ENCODE measurements at regions of chr1 and their contacts with region 1.

Region 1: DNA sequence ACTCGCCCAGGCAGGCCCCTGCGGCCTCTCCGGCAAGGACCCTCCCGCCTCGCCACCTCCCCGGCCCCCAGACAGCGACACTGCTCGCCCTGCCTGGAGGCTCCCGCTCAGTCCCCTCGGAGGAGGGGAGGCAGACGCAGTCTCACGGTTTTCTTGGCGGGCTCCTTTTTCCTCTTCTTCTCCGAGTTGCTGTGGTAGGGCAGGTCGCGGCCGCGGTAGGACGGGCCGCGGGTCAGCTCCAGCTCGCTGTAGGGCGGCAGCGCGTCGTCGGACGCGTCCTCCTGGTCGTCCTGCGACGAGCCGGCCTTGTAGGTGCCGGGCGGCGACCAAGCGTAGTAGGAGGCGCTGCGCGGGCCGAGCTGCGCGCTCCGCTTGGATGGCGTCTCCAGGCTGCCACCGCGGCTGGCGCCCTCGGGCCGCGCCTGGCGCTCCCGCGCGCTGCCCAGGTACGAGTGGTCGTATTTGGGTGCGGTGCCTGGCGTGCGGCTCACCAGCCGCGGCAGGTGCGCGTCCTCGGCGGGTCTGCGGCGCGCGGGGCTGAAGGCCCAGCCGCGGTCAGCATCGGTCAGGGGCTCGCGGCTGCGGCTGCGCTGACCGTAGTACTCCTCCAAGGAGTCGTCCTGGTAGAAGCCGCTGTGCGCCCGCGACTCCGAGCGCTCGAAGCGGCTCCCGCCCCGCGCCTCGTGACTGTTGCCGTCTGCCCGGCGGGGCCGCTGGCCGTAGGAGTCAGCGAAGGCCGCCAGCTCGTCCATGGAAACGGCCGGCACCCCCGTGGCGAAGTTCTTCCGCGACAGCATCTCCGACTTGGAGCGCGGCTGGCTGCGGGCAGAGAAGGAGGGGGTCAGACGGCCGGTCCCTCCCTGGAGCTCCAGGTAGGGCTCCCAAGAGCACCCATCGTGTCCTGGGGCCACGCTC is 44.8 kb upstream of the TADA1 start:
- DNase-seq: peak; percentile 57
- ATAC-seq: peak; percentile 55
- H3K4me3 ChIP-seq: peak overlapping the region in 3 of 5 experiments; percentile 33 to 59 (median 46)
- H3K4me3 Mint-ChIP-seq: peak overlapping the region; percentile 86
- H3K27ac ChIP-seq: no peak overlapping the region
- H3K27ac Mint-ChIP-seq: no peak overlapping the region
- H3K4me1 ChIP-seq: peaks cover 35 to 38% of the 10 kb centered on the region in 2 donors
- H3K4me1 Mint-ChIP-seq: peaks cover 33% of the 10 kb centered on the region
- H3K27me3 ChIP-seq: peaks cover 0 to 30% (median 23%) of the 10 kb centered on the region in 4 experiments
- H3K27me3 Mint-ChIP-seq: peaks cover 39% of the 10 kb centered on the region
- CTCF ChIP-seq: no peak

Region 2: DNA sequence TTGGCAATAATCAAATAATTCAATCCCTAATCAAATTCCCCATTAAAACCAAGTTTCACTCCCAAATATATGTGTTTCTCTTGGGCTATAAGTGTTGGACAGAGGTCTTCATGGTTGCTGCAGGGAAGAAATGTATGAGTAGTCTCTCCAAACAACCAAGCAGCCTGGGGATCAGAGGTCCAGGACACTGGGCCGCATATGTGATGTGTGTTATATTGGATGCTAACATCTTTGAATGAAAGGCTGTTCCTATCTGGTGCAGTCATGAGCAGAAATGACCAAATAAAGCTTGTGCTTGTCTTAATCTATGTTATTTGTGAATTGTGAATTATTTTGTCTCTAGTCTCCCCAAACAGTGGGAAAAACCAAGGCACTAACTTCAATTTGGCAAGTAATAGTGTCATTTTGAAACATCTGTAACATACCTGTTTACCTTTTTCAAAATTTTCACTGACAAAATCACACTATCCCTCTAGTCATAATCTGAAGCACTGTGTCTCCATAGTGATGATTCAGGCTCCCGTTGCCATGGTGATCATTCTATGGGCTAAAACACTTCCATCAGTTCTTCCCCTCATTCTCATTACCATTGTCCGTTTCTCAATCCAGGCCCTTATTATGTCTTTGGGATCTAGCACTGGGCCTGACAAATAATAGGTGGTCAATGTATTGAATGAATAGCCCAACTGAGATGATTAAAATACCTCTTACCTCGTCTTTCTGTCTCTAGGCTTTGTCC is 32.3 kb before region 1 on chr1:
- CTCF ChIA-PET with region 1: no interaction called
- POLR2A ChIA-PET with region 1: no interaction called
- intact Hi-C with region 1: no loop called
- DNase-seq: no peak
- ATAC-seq: no peak
- H3K4me3 ChIP-seq: no peak overlapping the region
- H3K4me3 Mint-ChIP-seq: no peak overlapping the region
- H3K27ac ChIP-seq: no peak overlapping the region
- H3K27ac Mint-ChIP-seq: no peak overlapping the region
- H3K4me1 ChIP-seq: peaks cover 14 to 16% of the 10 kb centered on the region in 2 donors
- H3K4me1 Mint-ChIP-seq: peaks cover 10% of the 10 kb centered on the region
- H3K27me3 ChIP-seq: peaks cover 0 to 31% (median 18%) of the 10 kb centered on the region in 4 experiments
- H3K27me3 Mint-ChIP-seq: peaks cover 37% of the 10 kb centered on the region
- CTCF ChIP-seq: no peak

Region 3: DNA sequence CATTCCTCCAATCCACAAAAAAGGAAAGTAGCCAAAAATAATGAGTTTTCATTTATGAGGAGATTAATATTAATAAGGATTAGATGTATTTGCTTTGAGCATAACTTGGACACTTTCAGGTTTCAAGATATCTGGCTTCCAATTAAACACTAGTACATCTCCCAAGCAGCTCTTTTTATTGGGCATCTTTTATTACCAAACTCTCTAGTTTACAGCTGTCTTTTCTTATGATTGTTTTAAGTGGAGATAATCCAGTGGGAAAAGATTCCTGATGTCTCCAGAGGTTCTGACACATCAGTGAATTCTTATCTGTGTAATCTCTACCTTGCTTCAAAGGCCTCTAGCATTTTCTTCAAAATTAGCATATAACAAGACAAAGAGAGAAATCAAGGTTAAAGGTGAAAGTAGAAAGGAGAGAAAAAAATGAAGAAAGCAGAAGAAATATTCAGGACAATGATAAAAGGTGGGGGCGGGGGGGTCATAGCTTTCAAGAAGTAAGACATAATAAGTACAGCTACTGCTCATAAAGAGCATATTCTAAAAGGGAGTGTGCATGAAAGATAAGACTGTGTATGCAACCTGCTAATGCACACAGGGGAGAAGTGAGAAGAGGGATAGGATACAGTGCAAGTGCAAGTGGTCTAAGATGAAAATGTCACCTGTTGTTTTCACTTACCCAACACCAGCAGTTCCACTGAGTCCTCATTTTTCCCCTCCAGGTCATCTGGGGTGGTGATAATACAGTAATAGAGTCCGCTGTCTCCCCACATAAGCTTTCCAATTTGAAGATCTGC is 35.4 kb after region 1 on chr1:
- CTCF ChIA-PET with region 1: no interaction called
- POLR2A ChIA-PET with region 1: no interaction called
- intact Hi-C with region 1: no loop called
- DNase-seq: no peak
- ATAC-seq: no peak
- H3K4me3 ChIP-seq: no peak overlapping the region
- H3K4me3 Mint-ChIP-seq: no peak overlapping the region
- H3K27ac ChIP-seq: no peak overlapping the region
- H3K27ac Mint-ChIP-seq: no peak overlapping the region
- H3K4me1 ChIP-seq: no peaks in the 10 kb centered on the region
- H3K4me1 Mint-ChIP-seq: no peaks in the 10 kb centered on the region
- H3K27me3 ChIP-seq: peaks cover 0 to 13% (median under 1%) of the 10 kb centered on the region in 4 experiments
- H3K27me3 Mint-ChIP-seq: peaks cover 29% of the 10 kb centered on the region
- CTCF ChIP-seq: no peak

Region 4: GRCh38 chr1:166969074-166969677 is 48.4 kb after region 1 on chr1:
- CTCF ChIA-PET with region 1: no interaction called
- POLR2A ChIA-PET with region 1: no interaction called
- intact Hi-C with region 1: loop called (anchors 5 kb)
- DNase-seq: peak; percentile 20
- ATAC-seq: no peak
- H3K4me3 ChIP-seq: no peak overlapping the region
- H3K4me3 Mint-ChIP-seq: no peak overlapping the region
- H3K27ac ChIP-seq: no peak overlapping the region
- H3K27ac Mint-ChIP-seq: no peak overlapping the region
- H3K4me1 ChIP-seq: peaks cover 7 to 9% of the 10 kb centered on the region in 2 donors
- H3K4me1 Mint-ChIP-seq: peaks cover 8% of the 10 kb centered on the region
- H3K27me3 ChIP-seq: peaks cover 0 to 42% (median 27%) of the 10 kb centered on the region in 4 experiments
- H3K27me3 Mint-ChIP-seq: peaks cover 44% of the 10 kb centered on the region
- CTCF ChIP-seq: no peak

Region 5: DNA sequence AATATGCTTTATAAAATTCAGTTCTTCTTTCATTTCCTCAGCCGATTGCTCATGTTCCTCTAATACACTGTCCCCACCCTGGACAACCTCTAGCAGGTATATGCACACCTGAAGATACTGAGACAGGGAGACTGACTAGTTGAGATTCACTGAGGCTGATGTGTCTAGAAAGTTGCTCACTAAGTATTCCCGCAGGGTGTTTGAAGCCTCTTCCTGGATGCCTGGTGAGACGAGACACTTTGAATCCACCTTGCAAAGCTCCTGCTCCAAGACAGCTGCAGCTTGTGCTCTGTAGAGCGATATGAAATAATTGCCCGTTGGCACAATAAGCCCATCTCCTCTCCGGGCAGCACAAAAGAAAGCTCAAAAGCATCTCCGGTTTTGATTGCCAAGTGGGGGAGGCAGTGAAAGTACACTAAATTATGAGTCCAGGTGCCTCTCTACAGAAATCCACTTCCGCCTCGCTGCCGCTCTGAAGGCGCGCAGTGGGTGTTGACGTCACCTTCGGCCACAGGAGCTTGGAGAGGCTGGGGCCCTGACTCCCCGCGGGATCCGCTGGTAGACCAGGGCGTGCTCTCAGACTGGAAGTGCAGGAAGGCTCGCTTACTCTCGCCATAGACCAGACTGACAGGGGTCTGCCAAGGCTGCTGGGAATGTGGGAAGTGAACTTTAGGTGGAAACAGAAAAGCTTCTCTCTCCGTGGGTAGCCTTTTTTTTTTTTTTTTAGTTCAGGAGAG is 123.1 kb after region 1 on chr1:
- CTCF ChIA-PET with region 1: no interaction called
- POLR2A ChIA-PET with region 1: no interaction called
- intact Hi-C with region 1: loop called (anchors 1 kb)
- DNase-seq: peak; percentile 77
- ATAC-seq: peak; percentile 91
- H3K4me3 ChIP-seq: peak overlapping the region; percentile 48 to 69 (median 53)
- H3K4me3 Mint-ChIP-seq: peak overlapping the region; percentile 83
- H3K27ac ChIP-seq: no peak overlapping the region
- H3K27ac Mint-ChIP-seq: peak overlapping the region; percentile 75
- H3K4me1 ChIP-seq: peaks cover 12 to 16% of the 10 kb centered on the region in 2 donors
- H3K4me1 Mint-ChIP-seq: peaks cover 12% of the 10 kb centered on the region
- H3K27me3 ChIP-seq: peaks cover 0 to 6% (median 6%) of the 10 kb centered on the region in 4 experiments
- H3K27me3 Mint-ChIP-seq: peaks cover 23% of the 10 kb centered on the region
- CTCF ChIP-seq: no peak